CD14-positive monocyte (primary cell): ENCODE measurements at regions of chr17 and their contacts with region 1.

Region 1: GRCh38 chr17:6913608-6914443 is 82.0 kb upstream of the ALOX12 start:
- DNase-seq: peak; percentile 37 to 59 (median 58)
- H3K4me3 ChIP-seq: peak overlapping the region in 2 of 3 experiments; percentile 41 to 61
- H3K4me3 Mint-ChIP-seq: peak overlapping the region; percentile 81 to 94
- H3K27ac ChIP-seq: no peak overlapping the region
- H3K27ac Mint-ChIP-seq: peak overlapping the region in 3 of 7 donors; percentile 44 to 89 (median 73)
- H3K4me1 ChIP-seq: peaks cover 6 to 9% of the 10 kb centered on the region in 2 donors
- H3K4me1 Mint-ChIP-seq: peaks cover 20% of the 10 kb centered on the region
- H3K27me3 ChIP-seq: no peaks in the 10 kb centered on the region
- H3K27me3 Mint-ChIP-seq: peaks cover 5 to 12% (median 7%) of the 10 kb centered on the region in 3 donors
- CTCF ChIP-seq: peak; percentile 93

Region 2: GRCh38 chr17:6651357-6651918 is 262.4 kb before region 1 on chr17 and contains the starts of genes C17orf100 and MED31:
- intact Hi-C with region 1: no loop called
- DNase-seq: peak; percentile 96 to 97 (median 96)
- H3K4me3 ChIP-seq: peak within 1 kb of the TSS; percentile 75 to 96 (median 95)
- H3K4me3 Mint-ChIP-seq: peak within 1 kb of the TSS; percentile 96 to 99
- H3K27ac ChIP-seq: peak within 1 kb of the TSS; percentile 91 to 99
- H3K27ac Mint-ChIP-seq: peak within 1 kb of the TSS; percentile 98 to 100 (median 99)
- H3K4me1 ChIP-seq: peaks cover 29 to 41% of the 10 kb centered on the region in 2 donors
- H3K4me1 Mint-ChIP-seq: peaks cover 52% of the 10 kb centered on the region
- H3K27me3 ChIP-seq: peaks cover 36 to 42% of the 10 kb centered on the region in 2 donors
- H3K27me3 Mint-ChIP-seq: peaks cover 41 to 44% (median 42%) of the 10 kb centered on the region in 3 donors
- CTCF ChIP-seq: no peak
- polyA plus RNA-seq, gene C17orf100: 0.51 to 1.8 (median 1.2) TPM
- polyA plus RNA-seq, gene MED31: 6.8 to 38.2 (median 33.6) TPM

Region 3: DNA sequence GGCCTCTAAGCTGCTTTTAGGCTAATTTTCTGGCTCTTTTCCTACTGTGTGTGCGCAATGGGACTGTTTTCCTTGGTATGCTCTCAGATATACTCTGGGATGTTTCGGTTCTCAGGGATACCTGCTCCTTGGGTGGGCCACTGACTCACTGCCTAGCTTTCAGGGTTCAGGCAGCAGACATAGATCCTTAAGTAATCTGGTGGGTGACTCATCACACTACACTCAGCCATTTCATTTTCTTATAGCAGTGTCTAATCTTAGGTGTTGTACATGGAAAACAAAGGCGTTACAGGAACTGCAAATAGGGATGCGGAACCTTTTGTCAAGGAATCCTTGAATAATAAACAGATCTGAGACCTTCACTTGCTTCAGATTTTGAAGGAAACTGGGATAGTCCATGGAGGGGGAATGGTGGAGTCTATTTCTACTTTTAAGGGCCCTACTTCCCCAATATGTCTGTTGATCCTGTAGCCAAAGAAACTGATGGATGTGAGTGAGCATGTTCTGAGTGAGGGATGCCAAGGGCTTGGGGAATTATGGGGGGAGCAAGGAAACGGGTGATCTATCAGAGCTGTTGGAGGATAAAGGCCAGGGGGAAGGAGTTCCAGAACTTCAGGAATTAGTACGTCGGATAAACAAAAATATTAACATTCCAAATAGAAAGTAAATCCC is 41.6 kb before region 1 on chr17:
- intact Hi-C with region 1: no loop called
- DNase-seq: no peak
- H3K4me3 ChIP-seq: no peak overlapping the region
- H3K4me3 Mint-ChIP-seq: no peak overlapping the region
- H3K27ac ChIP-seq: no peak overlapping the region
- H3K27ac Mint-ChIP-seq: peak overlapping the region in 1 of 7 donors; percentile 24
- H3K4me1 ChIP-seq: no peaks in the 10 kb centered on the region
- H3K4me1 Mint-ChIP-seq: no peaks in the 10 kb centered on the region
- H3K27me3 ChIP-seq: no peaks in the 10 kb centered on the region
- H3K27me3 Mint-ChIP-seq: peaks cover 6 to 13% (median 6%) of the 10 kb centered on the region in 3 donors
- CTCF ChIP-seq: no peak

Region 4: DNA sequence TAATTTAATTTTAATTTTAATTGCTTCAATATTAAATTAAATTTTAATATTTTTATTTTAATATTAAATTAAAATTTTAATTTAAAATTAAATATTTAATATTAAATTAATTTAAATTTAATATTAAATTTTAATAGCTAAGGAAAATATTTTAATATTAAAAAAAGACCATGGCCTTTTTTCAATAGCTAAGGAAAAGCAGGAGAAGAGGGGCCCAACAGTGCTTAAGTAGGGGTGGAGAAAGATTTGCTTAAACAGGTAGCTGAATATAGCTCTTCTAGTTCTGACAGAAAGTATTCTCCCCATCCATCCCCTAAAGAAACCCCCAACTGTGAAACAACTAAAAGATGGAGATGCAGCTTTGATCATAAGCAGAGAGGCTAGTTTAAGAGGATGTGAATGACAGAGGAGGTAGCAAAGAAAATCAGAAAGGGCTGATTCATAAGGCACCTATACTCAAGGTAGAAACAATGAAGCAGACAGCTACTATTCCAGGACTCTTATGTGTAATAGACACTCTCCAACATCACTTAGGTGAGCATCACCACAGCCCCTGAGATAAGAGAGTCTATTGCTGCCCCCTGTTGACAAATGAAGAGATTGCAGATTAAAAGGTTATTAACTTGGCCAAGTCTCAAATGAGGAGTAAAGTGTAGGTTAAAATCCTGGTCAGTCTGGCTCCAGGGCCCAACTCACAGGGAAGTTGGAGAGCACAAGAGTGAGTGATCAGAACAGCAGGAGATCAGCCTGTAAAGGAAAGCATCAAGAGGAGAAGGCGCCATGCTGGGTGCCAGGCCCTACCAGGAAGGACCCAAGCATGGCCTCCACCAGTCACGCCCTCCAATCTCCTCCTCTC is 90.8 kb after region 1 on chr17:
- intact Hi-C with region 1: loop called (anchors 2 kb)
- DNase-seq: peak; percentile 47 to 73 (median 65)
- H3K4me3 ChIP-seq: no peak overlapping the region
- H3K4me3 Mint-ChIP-seq: no peak overlapping the region
- H3K27ac ChIP-seq: no peak overlapping the region
- H3K27ac Mint-ChIP-seq: peak overlapping the region in 4 of 7 donors; percentile 36 to 86 (median 69)
- H3K4me1 ChIP-seq: peaks cover 3 to 6% of the 10 kb centered on the region in 2 donors
- H3K4me1 Mint-ChIP-seq: peaks cover 21% of the 10 kb centered on the region
- H3K27me3 ChIP-seq: no peaks in the 10 kb centered on the region
- H3K27me3 Mint-ChIP-seq: peaks cover 0 to 1% (median 0%) of the 10 kb centered on the region in 3 donors
- CTCF ChIP-seq: peak; percentile 85

Region 5: DNA sequence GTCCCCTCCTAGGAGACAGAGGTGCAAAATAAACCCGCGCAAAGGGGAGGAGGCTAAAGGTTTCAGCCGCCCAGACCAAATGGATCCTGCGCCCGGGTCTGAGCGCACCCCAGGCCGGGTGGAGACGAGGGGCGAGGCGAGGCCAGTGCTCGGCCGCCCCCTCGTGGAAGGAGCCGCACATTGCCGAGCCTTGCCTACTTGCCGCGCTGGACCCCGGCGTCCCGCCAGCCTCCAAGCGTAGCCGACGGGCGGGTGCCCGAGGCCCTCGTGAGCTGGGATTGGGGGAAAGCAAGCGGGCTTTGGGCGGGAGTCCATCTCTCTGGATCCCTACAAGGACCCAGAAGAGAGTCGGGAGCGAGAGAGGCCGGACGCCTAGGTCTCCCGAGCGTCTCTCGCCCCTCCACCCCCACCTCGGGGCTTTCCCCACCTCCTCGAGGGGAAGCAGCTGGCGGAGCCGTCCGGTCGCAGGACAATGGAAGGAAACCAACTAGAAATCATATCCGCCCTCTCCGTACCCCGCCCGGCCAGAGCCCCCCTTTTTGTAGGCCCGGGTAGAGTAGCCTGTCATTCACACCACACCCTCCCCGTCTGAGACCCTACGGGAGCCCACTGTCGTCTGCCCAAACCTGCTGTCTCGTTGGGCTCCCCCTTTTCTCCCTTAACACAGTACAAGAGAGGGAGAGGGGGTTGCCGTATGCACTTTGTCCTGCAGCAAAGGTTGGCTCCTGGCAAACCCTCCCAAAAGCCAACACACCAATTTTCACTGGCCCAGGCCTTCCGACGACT is 108.4 kb after region 1 on chr17:
- intact Hi-C with region 1: loop called (anchors 5 kb)
- DNase-seq: peak; percentile 74 to 79 (median 77)
- H3K4me3 ChIP-seq: peak overlapping the region in 2 of 3 experiments; percentile 19 to 68
- H3K4me3 Mint-ChIP-seq: peak overlapping the region; percentile 78 to 91
- H3K27ac ChIP-seq: no peak overlapping the region
- H3K27ac Mint-ChIP-seq: peak overlapping the region in 5 of 7 donors; percentile 26 to 84 (median 75)
- H3K4me1 ChIP-seq: peaks cover 24 to 36% of the 10 kb centered on the region in 2 donors
- H3K4me1 Mint-ChIP-seq: peaks cover 38% of the 10 kb centered on the region
- H3K27me3 ChIP-seq: peaks cover 0 to 25% of the 10 kb centered on the region in 2 donors
- H3K27me3 Mint-ChIP-seq: peaks cover 26 to 35% (median 33%) of the 10 kb centered on the region in 3 donors
- CTCF ChIP-seq: peak; percentile 98

Region 6: DNA sequence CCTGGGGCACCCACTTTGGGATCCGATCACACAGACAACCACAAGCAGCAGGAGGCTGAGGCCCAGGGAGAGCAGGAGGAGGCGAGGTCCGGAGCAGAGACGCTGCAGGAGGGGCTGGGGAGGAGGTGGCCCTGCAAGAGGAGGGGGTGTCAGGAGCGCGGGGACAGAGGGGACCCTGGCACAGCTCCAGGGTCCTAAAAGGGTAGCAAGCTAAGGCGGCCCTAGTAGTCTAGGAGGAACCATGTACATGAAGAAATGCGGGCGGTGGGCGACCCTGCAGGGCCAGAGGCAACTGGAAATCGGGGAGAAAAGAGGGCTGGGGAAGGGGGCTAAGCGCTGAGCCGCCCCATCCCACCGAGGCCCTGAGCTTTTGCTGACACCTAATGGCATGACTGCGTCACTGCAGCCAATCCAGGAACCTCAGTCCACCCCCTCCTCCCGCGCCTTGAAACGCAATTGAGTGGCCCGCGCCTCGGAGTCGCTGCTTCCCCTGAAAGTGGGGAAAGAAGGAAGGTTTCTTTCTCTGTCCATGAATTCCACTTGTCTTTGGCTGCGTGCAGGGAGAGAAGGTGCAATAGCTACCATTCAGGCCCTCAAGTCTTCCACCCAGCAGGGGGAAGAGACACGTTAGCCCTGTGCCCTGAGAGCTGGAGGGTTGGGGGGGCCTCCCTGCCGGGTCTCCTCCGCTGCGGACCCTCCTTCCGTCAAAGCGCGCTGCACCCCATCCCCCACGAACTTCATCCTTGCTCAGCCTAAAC is 263.5 kb after region 1 on chr17:
- intact Hi-C with region 1: loop called (anchors 10 kb)
- DNase-seq: peak; percentile 67 to 79 (median 78)
- H3K4me3 ChIP-seq: peak overlapping the region in 1 of 3 experiments; percentile 72
- H3K4me3 Mint-ChIP-seq: peak overlapping the region in 1 of 2 donors; percentile 86
- H3K27ac ChIP-seq: no peak overlapping the region
- H3K27ac Mint-ChIP-seq: peak overlapping the region in 5 of 7 donors; percentile 6 to 64 (median 30)
- H3K4me1 ChIP-seq: peaks cover 32 to 38% of the 10 kb centered on the region in 2 donors
- H3K4me1 Mint-ChIP-seq: peaks cover 15% of the 10 kb centered on the region
- H3K27me3 ChIP-seq: peaks cover 5 to 11% of the 10 kb centered on the region in 2 donors
- H3K27me3 Mint-ChIP-seq: peaks cover 16 to 19% (median 19%) of the 10 kb centered on the region in 3 donors
- CTCF ChIP-seq: peak; percentile 98